AG04449 (cell line): ENCODE measurements at regions of chr1 and their contacts with region 1.

Region 1: DNA sequence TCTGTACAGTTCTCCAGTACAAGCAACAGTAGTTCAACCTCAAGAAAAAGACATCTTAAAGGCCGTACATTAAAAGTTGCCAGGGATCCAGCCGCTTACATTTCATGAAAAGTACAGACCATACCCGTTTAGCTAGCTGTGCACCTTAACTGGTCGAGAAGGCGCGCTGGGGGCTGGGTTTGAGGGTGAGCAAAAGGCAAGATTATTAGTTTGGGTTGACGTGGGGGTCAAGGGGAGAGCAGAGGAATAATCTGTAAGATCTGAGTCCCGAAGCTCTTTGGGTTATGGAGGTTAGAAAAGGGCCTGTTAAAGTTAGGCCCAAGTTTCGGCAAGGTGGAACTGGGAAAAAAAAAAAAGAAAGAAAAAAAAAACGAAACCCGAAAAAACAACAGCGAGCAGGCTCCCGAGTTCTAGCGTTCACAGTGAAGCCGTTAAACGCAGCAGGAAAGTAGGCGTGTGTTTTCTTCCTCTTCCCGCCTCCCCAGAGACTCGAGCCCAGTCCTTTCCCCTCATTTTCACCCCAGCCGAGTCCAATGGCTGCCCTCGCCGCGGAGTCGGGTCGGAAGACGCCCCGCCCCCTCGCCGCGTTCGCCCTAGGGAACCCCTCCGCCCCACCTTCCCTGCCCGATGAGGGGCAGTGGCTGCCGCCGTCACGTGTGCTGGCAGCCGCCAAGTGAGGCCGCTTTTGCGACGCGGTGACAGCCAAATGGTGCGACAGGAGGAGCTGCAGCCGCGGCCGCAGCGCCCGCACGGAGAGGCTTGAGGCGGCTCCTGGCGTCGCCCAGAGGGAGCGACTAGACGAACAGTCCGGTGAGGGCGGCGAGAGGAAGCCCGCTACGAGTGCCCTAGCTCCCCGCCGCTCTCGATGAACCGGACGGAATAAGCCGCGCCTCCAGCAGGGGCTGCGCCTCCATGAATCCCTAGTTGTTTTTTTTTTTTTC is at the start of gene PKN2:
- DNase-seq: peak; percentile 87
- H3K4me3 ChIP-seq: peak within 1 kb of the TSS; percentile 79
- CTCF ChIP-seq: peak; percentile 35

Region 2: DNA sequence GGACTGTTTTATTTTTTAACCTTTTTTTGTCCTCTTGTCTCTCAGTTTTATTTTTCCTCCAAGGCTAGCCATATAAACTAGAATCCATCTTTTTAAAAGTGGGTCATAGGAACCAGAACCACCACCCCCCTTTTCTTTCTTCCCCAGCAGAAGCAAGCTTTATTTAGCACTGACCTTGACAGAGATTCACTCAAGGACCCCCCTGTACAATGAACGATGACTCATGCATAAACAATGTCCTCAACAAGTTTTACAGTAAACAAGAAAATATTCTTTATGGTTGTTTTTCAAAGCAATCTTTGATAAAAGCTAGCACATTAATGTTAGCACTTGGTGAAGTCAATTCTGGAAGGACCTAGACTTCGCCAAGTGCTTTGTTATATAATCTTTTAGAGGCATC is 14.3 kb after region 1 on chr1:
- CTCF ChIA-PET with region 1: interaction called, 25 read pairs
- POLR2A ChIA-PET with region 1: interaction called, 6 read pairs
- DNase-seq: no peak
- H3K4me3 ChIP-seq: no peak overlapping the region
- CTCF ChIP-seq: no peak